CD4-positive, alpha-beta memory T cell (primary cell): ENCODE measurements at regions of chr11 and their contacts with region 1.

Region 1: GRCh38 chr11:106076919-106077608 is at the start of gene KBTBD3:
- DNase-seq: peak; percentile 97 to 99 (median 98)
- H3K4me3 ChIP-seq: peak within 1 kb of the TSS; percentile 74 to 91
- H3K4me3 Mint-ChIP-seq: peak within 1 kb of the TSS; percentile 94 to 99 (median 98)
- H3K27ac ChIP-seq: peak within 1 kb of the TSS; percentile 93
- H3K27ac Mint-ChIP-seq: peak within 1 kb of the TSS; percentile 97 to 100 (median 99)
- H3K4me1 ChIP-seq: peaks cover 54% of the 10 kb centered on the region
- H3K4me1 Mint-ChIP-seq: peaks cover 48 to 82% (median 58%) of the 10 kb centered on the region in 4 donors
- H3K27me3 ChIP-seq: no peaks in the 10 kb centered on the region
- H3K27me3 Mint-ChIP-seq: no peaks in the 10 kb centered on the region
- total RNA-seq, gene KBTBD3: 14.4 to 18.6 TPM

Region 2: GRCh38 chr11:104700609-104701008 is 1376.5 kb before region 1 on chr11:
- CTCF ChIA-PET with region 1: no interaction called
- POLR2A ChIA-PET with region 1: no interaction called
- intact Hi-C with region 1: loop called (anchors 5 kb)
- DNase-seq: peak; percentile 16 to 43 (median 33)
- H3K4me3 ChIP-seq: no peak overlapping the region
- H3K4me3 Mint-ChIP-seq: peak overlapping the region in 6 of 8 donors; percentile 16 to 70 (median 50)
- H3K27ac ChIP-seq: no peak overlapping the region
- H3K27ac Mint-ChIP-seq: peak overlapping the region; percentile 17 to 84 (median 64)
- H3K4me1 ChIP-seq: peaks cover 46% of the 10 kb centered on the region
- H3K4me1 Mint-ChIP-seq: peaks cover 29 to 35% (median 32%) of the 10 kb centered on the region in 4 donors
- H3K27me3 ChIP-seq: no peaks in the 10 kb centered on the region
- H3K27me3 Mint-ChIP-seq: no peaks in the 10 kb centered on the region

Region 3: DNA sequence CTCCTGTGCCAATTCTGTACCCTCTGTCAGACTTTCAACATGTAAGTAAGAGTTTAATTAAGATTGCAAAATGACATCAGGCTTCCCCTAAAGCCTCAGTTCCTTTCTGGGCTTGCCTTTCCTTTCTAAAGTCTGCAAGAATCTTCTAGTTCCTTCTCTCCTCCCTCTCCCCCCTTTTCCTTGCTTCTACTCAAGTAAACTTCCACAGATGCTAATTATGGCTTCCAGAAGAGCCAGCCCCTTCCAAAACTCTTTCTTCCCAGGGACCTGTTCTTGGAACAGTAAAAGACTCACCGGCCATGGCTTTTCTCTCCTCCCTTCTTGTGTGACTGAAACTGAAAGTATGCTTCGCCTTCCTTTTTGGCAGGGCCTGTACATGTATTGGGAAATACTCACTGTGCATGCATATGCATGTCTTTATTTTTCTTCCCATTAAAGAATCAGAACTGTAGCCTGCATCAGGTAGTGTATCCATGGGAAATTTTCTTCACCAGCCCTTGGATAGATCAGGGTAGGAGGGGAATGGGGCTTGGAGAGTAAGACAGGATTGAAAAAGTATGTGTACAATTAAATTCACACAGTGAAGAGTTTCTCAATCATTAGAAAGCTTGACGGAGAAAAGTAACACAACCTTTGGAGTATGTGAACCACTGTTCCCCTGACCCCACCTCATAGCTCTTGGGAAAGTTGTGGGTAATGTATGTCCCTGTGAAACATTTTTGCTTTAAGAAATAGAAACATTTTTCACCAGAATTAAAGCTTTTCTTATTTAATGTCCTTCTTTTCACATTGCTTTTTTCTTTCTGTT is 1042.0 kb before region 1 on chr11 and contains the start of gene CASP1:
- CTCF ChIA-PET with region 1: no interaction called
- POLR2A ChIA-PET with region 1: no interaction called
- intact Hi-C with region 1: loop called (anchors 10 kb)
- DNase-seq: peak in 4 of 5 donors; percentile 34 to 56 (median 48)
- H3K4me3 ChIP-seq: peak within 1 kb of the TSS; percentile 60 to 64
- H3K4me3 Mint-ChIP-seq: peak within 1 kb of the TSS; percentile 95 to 100 (median 98)
- H3K27ac ChIP-seq: peak within 1 kb of the TSS; percentile 74
- H3K27ac Mint-ChIP-seq: peak within 1 kb of the TSS; percentile 89 to 99 (median 98)
- H3K4me1 ChIP-seq: peaks cover 47% of the 10 kb centered on the region
- H3K4me1 Mint-ChIP-seq: peaks cover 30 to 68% (median 47%) of the 10 kb centered on the region in 4 donors
- H3K27me3 ChIP-seq: no peaks in the 10 kb centered on the region
- H3K27me3 Mint-ChIP-seq: no peaks in the 10 kb centered on the region
- total RNA-seq, gene CASP1: 74.8 to 96.8 TPM

Region 4: DNA sequence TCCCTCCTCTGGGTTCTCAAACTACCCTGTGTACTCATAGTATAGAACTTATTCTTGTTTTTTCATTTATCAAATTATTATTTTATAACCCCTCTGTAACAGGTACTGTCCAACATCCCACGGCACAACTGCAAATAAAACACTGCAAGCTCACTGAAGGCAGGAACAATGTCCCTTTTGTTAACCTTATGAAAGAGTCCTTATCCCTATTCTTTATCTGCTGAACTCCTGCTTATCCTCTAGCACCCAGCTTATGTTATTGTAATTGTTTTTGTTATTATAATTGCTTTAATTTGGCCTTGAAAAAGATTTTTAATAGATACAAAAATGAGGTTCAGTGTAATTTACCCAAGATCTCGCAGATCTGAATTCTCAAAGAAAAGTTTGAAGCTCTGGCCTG is 185.4 kb before region 1 on chr11:
- CTCF ChIA-PET with region 1: no interaction called
- POLR2A ChIA-PET with region 1: no interaction called
- intact Hi-C with region 1: no loop called
- DNase-seq: no peak
- H3K4me3 ChIP-seq: no peak overlapping the region
- H3K4me3 Mint-ChIP-seq: no peak overlapping the region
- H3K27ac ChIP-seq: no peak overlapping the region
- H3K27ac Mint-ChIP-seq: no peak overlapping the region
- H3K4me1 ChIP-seq: no peaks in the 10 kb centered on the region
- H3K4me1 Mint-ChIP-seq: no peaks in the 10 kb centered on the region
- H3K27me3 ChIP-seq: no peaks in the 10 kb centered on the region
- H3K27me3 Mint-ChIP-seq: no peaks in the 10 kb centered on the region

Region 5: DNA sequence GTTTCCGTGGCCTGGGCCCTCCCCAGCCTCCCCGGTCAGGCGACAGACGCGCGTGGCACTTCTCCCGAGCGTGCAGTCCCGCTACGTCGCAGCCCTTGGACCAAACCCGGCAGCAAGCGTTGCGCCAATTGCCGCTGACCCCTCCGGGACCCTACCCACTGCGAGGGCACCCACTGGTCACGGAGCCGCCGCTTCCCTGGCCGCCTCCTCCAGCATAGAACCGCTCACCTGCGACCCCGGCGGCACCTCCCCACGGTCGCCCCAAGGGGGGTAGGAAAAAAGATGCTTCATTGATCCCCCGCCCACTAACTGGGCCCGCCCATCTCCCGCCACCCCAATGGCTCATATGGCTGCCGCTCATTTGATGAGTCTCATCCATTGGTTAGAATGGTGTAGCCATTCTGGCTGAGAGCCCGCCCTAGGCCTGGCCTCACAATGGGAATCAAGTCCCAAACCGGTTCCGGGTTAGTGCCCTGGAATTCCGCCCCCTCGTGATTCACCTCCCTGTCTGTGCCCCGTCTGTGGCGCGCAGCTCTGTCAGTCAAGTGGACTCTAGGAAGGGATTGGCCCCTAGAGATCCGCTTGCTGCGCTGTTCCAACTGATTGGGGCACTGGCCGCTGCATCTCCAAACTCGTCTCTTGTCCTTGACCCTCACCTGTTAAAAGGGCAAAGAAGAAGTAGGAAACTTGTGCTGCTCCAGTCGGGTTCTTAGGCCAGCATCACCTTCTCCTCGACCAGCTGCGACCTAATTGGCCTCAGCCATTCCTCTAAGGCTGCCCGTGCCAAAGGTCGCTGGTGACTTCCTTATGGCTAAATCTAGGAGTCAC is 54.9 kb before region 1 on chr11 and contains the start of gene MSANTD4:
- CTCF ChIA-PET with region 1: interaction called, 5 read pairs
- POLR2A ChIA-PET with region 1: interaction called, 14 read pairs
- intact Hi-C with region 1: loop called (anchors 1 kb)
- DNase-seq: peak; percentile 97 to 99 (median 97)
- H3K4me3 ChIP-seq: peak within 1 kb of the TSS; percentile 90
- H3K4me3 Mint-ChIP-seq: peak within 1 kb of the TSS; percentile 93 to 99 (median 96)
- H3K27ac ChIP-seq: peak within 1 kb of the TSS; percentile 64
- H3K27ac Mint-ChIP-seq: peak within 1 kb of the TSS; percentile 82 to 97 (median 92)
- H3K4me1 ChIP-seq: peaks cover 32% of the 10 kb centered on the region
- H3K4me1 Mint-ChIP-seq: peaks cover 29 to 55% (median 39%) of the 10 kb centered on the region in 4 donors
- H3K27me3 ChIP-seq: no peaks in the 10 kb centered on the region
- H3K27me3 Mint-ChIP-seq: peaks cover 3% of the 10 kb centered on the region in 2 donors
- total RNA-seq, gene MSANTD4: 23.0 to 24.7 TPM

Region 6: GRCh38 chr11:106087815-106088435 is 10.9 kb after region 1 on chr11:
- CTCF ChIA-PET with region 1: interaction called, 22 read pairs
- POLR2A ChIA-PET with region 1: interaction called, 11 read pairs
- intact Hi-C with region 1: no loop called
- DNase-seq: peak; percentile 19 to 46 (median 29)
- H3K4me3 ChIP-seq: no peak overlapping the region
- H3K4me3 Mint-ChIP-seq: peak overlapping the region in 3 of 8 donors; percentile 0 to 61 (median 57)
- H3K27ac ChIP-seq: no peak overlapping the region
- H3K27ac Mint-ChIP-seq: peak overlapping the region in 1 of 7 donors; percentile 47
- H3K4me1 ChIP-seq: peaks cover 36% of the 10 kb centered on the region
- H3K4me1 Mint-ChIP-seq: peaks cover 37 to 54% (median 42%) of the 10 kb centered on the region in 4 donors
- H3K27me3 ChIP-seq: no peaks in the 10 kb centered on the region
- H3K27me3 Mint-ChIP-seq: no peaks in the 10 kb centered on the region

Region 7: GRCh38 chr11:107457558-107458271 is 1380.7 kb after region 1 on chr11 and contains the start of gene CWF19L2:
- CTCF ChIA-PET with region 1: no interaction called
- POLR2A ChIA-PET with region 1: interaction called, 9 read pairs
- intact Hi-C with region 1: loop called (anchors 2 kb)
- DNase-seq: peak; percentile 90 to 94 (median 93)
- H3K4me3 ChIP-seq: peak within 1 kb of the TSS; percentile 78 to 90
- H3K4me3 Mint-ChIP-seq: peak within 1 kb of the TSS; percentile 91 to 97 (median 94)
- H3K27ac ChIP-seq: peak within 1 kb of the TSS; percentile 81
- H3K27ac Mint-ChIP-seq: peak within 1 kb of the TSS; percentile 80 to 97 (median 95)
- H3K4me1 ChIP-seq: peaks cover 16% of the 10 kb centered on the region
- H3K4me1 Mint-ChIP-seq: peaks cover 22 to 31% (median 25%) of the 10 kb centered on the region in 4 donors
- H3K27me3 ChIP-seq: no peaks in the 10 kb centered on the region
- H3K27me3 Mint-ChIP-seq: no peaks in the 10 kb centered on the region
- total RNA-seq, gene CWF19L2: 34.8 to 38.8 TPM